ENCODE measurements at regions of chr16 and their contacts with region 1.

Region 1: GRCh38 chr16:47492428-47493377 is 31.6 kb downstream of the PHKB start:
- DNase-seq: peak; percentile 92

Region 2: DNA sequence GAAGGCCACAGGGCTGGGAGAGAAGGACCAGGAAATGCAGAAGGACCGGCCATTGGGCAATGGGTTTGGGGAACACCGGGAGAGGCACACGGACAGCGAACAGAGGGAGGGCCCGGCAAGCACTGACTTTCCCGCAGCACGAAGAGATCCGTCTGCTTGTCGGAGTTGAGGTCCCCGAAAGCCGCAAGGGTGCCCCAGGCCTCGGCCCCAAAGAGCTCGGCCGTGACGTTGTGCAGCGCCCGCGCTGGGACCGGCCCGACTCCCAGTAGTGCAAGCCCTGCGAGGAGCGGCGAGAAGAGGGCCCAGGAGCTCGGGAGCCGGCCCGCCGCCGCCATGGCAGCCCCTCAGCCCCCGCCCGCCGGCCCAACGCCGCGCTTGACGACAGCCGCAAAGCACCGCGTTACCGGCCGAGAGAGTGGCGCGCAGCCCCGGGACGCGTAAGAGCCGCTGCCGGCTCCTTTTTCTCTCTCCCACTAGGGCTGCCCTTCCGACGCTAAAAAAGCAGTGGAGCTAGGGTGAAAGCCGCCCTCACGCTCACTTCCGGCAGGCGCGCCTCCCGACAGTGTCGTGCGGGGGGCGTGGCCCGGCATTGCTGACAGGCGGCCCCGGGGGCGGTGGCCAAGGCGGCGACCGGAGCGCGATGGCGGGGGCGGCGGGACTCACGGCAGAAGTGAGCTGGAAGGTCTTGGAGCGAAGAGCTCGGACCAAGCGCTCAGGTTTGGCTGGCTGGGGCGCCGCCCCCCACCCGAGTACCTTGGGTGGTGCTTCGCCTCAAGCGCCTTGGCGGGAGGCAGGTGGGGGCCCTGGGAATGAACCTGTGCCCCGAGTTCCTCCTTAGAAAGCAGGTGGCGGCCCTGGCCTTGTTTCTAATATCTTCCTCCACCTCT is 31.7 kb before region 1 on chr16 and contains the starts of genes ITFG1 and PHKB:
- intact Hi-C with region 1: loop called (anchors 2 kb)
- DNase-seq: peak; percentile 97
- total RNA-seq, gene ITFG1: 69.6 TPM
- total RNA-seq, gene PHKB: 53.3 TPM

Region 3: DNA sequence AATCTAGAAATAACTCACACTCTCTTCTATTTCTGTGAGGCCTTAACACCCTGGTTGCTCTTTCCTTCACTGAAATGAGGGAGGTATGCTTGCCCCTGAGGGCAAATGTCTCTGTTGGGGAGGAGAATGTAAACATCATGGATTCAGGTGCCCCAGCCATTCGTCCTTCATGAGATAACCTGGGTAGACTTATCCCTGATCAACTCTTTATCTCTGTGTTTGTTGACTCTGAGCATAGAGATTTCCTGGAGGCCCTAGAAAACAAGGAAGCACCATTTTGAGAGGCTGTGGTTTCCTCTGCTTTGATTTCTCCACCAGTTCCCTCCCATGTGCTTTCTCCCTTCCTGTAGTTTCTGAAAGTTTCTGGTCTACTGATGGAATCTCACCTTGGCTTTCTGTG is 45.8 kb after region 1 on chr16:
- intact Hi-C with region 1: no loop called
- DNase-seq: no peak